ENCODE measurements at regions of chr17 and their contacts with region 1.

Region 1: DNA sequence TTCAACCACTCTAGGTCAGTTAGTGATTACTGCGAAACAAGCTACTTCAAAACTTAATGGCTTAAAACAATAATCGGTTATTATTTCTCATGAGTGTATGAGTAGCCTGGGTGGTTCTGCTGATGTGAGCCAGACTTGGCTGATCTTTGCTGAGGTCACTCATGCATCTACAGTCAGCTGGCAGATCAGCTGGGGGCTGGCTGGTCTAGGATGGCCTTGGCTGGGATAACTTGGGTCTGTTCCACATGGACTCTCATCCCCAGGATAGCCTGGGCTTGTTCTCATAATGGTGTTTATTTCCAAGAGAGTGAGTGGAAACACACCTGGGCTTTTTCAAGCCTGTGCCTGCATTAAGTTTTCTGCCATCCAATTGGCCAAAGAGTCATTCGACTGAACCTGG is 13.0 kb downstream of the CCDC182 start:
- DNase-seq: no peak
- H3K4me3 ChIP-seq: no peak overlapping the region
- H3K27ac ChIP-seq: no peak overlapping the region
- H3K4me1 ChIP-seq: no peaks in the 10 kb centered on the region
- H3K27me3 ChIP-seq: no peaks in the 10 kb centered on the region
- CTCF ChIP-seq: no peak
- POLR2A ChIP-seq: no peak

Region 2: GRCh38 chr17:57679906-57680695 is 52.0 kb before region 1 on chr17:
- intact Hi-C with region 1: loop called (anchors 2 kb)
- DNase-seq: no peak
- H3K4me3 ChIP-seq: no peak overlapping the region
- H3K27ac ChIP-seq: no peak overlapping the region
- H3K4me1 ChIP-seq: no peaks in the 10 kb centered on the region
- H3K27me3 ChIP-seq: no peaks in the 10 kb centered on the region
- CTCF ChIP-seq: no peak
- POLR2A ChIP-seq: no peak

Region 3: GRCh38 chr17:58046239-58047094 is 314.4 kb after region 1 on chr17:
- intact Hi-C with region 1: no loop called
- DNase-seq: no peak
- H3K4me3 ChIP-seq: no peak overlapping the region
- H3K27ac ChIP-seq: no peak overlapping the region
- H3K4me1 ChIP-seq: no peaks in the 10 kb centered on the region
- H3K27me3 ChIP-seq: no peaks in the 10 kb centered on the region
- CTCF ChIP-seq: no peak
- POLR2A ChIP-seq: no peak

Measured in breast epithelium (tissue), 4 donors.